ENCODE measurements at regions of chr7 and their contacts with region 1.

Region 1: DNA sequence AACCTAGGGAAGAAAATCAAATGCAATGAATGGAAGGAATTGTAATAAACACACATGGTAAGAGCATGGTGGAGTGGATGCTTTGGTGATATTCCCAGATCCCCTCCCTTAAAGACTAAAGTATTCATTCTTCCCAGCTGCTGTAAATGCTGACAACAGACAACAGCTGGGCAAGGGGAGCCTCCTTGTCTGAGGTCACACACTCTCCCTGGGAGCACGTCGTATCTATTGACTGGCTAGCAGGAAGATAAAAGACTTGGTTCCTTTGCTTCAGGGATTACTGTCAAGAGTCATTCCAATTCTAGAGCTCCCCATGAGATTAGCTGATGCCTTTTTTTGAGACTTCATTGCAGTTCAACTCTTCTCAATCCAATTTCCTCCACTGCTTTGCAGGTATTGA is 443.5 kb upstream of the ETV1 start:
- DNase-seq: no peak
- H3K4me3 ChIP-seq: no peak overlapping the region
- H3K27ac ChIP-seq: no peak overlapping the region
- H3K4me1 ChIP-seq: no peaks in the 10 kb centered on the region
- H3K27me3 ChIP-seq: no peaks in the 10 kb centered on the region
- CTCF ChIP-seq: no peak
- POLR2A ChIP-seq: no peak

Region 2: GRCh38 chr7:14403587-14403986 is 29.3 kb before region 1 on chr7:
- intact Hi-C with region 1: loop called (anchors 2 kb)
- DNase-seq: no peak
- H3K4me3 ChIP-seq: no peak overlapping the region
- H3K27ac ChIP-seq: no peak overlapping the region
- H3K4me1 ChIP-seq: no peaks in the 10 kb centered on the region
- H3K27me3 ChIP-seq: no peaks in the 10 kb centered on the region
- CTCF ChIP-seq: no peak
- POLR2A ChIP-seq: no peak

Region 3: GRCh38 chr7:15607529-15608210 is 1174.7 kb after region 1 on chr7:
- intact Hi-C with region 1: no loop called
- DNase-seq: no peak
- H3K4me3 ChIP-seq: no peak overlapping the region
- H3K27ac ChIP-seq: no peak overlapping the region
- H3K4me1 ChIP-seq: no peaks in the 10 kb centered on the region
- H3K27me3 ChIP-seq: no peaks in the 10 kb centered on the region
- CTCF ChIP-seq: no peak
- POLR2A ChIP-seq: no peak

Measured in breast epithelium (tissue), 4 donors.